Sciatic nerve (tissue), 2 donors: ENCODE measurements at regions of chr15 and their contacts with region 1.

Region 1: GRCh38 chr15:73078722-73079121 is 26.5 kb downstream of the NEO1 start:
- DNase-seq: no peak
- ATAC-seq: no peak

Region 2: DNA sequence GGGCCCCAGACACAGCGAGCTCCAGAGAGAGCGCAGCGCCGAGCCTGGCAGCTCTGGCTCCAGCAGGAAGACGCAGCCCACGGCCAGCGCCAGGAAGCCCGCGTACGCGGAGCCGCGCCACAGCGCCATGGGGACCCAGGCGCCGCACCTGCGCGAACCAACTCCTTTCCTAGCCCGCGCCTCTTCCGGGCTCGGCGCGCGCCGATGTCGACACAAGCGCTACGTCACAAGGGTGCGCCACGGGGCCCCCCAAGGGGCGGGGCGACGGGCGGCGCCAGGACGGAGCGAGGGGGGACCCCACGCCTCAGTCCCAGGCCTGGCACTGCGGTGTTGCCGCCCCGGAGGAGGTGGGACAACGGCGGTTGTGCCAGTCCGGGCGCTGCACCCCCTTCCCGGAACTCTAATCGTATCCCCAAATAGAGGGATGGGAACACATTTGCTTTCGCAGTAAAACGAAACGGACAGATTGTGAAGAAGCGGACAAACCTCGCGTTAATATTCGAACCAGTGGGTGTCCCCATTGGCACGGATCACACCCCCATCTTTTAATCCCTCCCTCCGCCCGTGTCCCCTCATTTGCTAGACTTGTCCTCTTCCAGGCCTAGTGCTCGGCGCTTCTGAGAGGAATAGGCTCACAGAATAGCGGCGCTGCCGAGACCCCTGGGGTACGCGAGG is 295.0 kb before region 1 on chr15 and contains the start of gene ADPGK:
- intact Hi-C with region 1: loop called (anchors 10 kb)
- DNase-seq: peak; percentile 95
- ATAC-seq: peak; percentile 98
- total RNA-seq, gene ADPGK: 50.6 TPM

Region 3: DNA sequence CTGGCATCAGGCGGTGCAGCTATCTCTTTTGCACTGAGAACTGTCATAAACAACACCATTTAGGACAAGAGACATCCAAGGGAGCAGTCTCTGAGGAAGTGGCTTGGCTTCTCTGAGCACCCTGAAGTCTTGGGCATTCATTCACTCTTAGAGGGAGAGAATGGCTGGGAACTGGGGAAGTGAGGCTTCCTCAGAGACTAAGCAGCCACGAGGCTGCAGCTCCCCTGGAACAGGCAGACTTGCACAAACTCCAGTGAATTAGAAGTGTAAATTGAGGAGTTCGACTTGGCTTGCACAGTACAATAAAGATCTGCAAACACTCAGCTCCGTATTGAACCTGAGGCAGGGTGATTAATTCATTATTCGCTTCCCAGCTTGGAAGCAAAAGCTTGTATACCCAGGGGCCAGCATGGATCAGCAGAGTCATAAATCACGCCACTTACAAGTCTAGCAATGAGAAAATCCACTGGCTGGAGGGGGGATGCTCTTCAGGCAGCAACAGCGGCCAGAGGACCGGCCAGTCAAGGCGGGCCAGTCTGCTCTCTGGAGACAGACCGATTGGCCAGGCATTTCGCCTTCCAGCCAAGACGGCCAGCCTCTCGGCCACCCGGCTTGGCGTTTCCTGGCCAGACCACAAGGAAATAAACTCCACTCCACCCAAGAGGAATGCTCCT is 176.3 kb before region 1 on chr15:
- intact Hi-C with region 1: loop called (anchors 2 kb)
- DNase-seq: peak; percentile 78
- ATAC-seq: peak; percentile 98

Region 4: DNA sequence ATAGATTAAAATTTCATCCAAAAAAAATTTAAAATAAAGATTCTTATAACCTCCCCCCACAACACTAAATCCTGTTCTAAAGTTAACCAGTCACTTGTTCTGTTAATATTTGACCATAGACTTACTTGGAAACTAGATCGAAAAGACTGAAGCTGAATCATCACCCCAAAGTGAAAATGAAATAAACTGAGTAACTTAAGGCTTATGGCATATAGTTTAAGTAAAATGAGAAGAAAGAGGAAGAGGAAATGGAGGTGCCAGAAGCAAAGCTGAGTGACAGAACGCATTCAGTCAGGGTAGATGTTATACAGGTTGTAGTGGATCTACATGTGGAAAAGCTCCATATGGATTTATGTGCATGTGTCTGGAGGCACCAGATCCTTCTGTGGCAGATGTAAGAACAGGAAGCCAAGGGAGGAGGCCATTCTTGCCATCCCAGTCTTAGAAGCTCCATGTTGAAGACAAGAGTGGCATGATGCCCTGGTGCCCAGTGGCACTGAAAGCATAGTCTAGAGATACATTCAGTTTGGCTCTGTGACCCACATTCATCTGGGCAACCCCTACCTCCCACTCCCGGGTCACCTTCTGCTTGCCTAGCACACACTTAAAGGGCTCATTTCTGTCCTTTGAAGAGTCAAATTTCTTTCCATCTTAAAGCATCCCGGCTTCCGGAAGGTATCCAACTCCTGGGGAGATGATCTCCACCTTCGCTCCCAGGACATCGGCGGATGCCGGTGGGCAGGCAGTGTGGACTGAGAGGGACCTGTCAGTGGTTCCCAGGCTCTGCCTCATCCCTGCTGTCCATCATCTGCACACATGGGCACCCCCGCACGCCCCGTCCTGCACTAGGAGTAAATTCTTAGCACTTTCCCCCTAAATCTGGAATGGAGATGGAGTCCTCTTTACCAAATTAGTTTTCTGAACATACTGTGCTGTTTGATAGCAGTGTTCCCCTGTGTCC is 64.4 kb after region 1 on chr15:
- intact Hi-C with region 1: no loop called
- DNase-seq: no peak
- ATAC-seq: no peak

Region 5: GRCh38 chr15:73156431-73157191 is 77.9 kb after region 1 on chr15:
- intact Hi-C with region 1: no loop called
- DNase-seq: no peak
- ATAC-seq: no peak